ENCODE measurements at regions of chr19 and their contacts with region 1.

Region 1: GRCh38 chr19:34974646-34975045 is 10.6 kb upstream of the ZNF792 start:
- DNase-seq: no peak
- H3K4me3 ChIP-seq: no peak overlapping the region
- H3K27ac ChIP-seq: peak overlapping the region in 1 of 59 donors; percentile 20
- H3K27me3 ChIP-seq: no peaks in the 10 kb centered on the region
- CTCF ChIP-seq: no peak

Region 2: GRCh38 chr19:35013031-35013819 is 38.6 kb after region 1 on chr19:
- intact Hi-C with region 1: loop called (anchors 2 kb)
- DNase-seq: peak in 6 of 10 donors; percentile 49 to 71 (median 56)
- H3K4me3 ChIP-seq: peak overlapping the region in 1 of 59 donors; percentile 21
- H3K27ac ChIP-seq: peak overlapping the region in 19 of 59 donors; percentile 3 to 61 (median 36)
- H3K27me3 ChIP-seq: no peaks in the 10 kb centered on the region
- CTCF ChIP-seq: peak; percentile 67 to 96 (median 90)

Region 3: GRCh38 chr19:35044317-35045117 is 69.9 kb after region 1 on chr19:
- intact Hi-C with region 1: loop called in 1 of 2 experiments (anchors 2 kb)
- DNase-seq: peak in 9 of 10 donors; percentile 73 to 84 (median 79)
- H3K4me3 ChIP-seq: no peak overlapping the region
- H3K27ac ChIP-seq: peak overlapping the region in 53 of 59 donors; percentile 7 to 99 (median 74)
- H3K27me3 ChIP-seq: no peaks in the 10 kb centered on the region
- CTCF ChIP-seq: peak; percentile 92 to 100 (median 98)

Region 4: GRCh38 chr19:35090506-35091237 is 116.0 kb after region 1 on chr19:
- intact Hi-C with region 1: loop called in 1 of 2 experiments (anchors 5 kb)
- DNase-seq: peak in 5 of 10 donors; percentile 54 to 77 (median 60)
- H3K4me3 ChIP-seq: peak overlapping the region in 58 of 59 donors; percentile 13 to 62 (median 42)
- H3K27ac ChIP-seq: peak overlapping the region in 56 of 59 donors; percentile 5 to 89 (median 72)
- H3K27me3 ChIP-seq: peaks cover 0 to 4% (median 0%) of the 10 kb centered on the region in 45 donors
- CTCF ChIP-seq: peak; percentile 22 to 83 (median 70)

Region 5: GRCh38 chr19:35140962-35141637 is 166.5 kb after region 1 on chr19:
- intact Hi-C with region 1: loop called in 1 of 2 experiments (anchors 5 kb)
- DNase-seq: peak; percentile 81 to 97 (median 94)
- H3K4me3 ChIP-seq: peak overlapping the region; percentile 16 to 80 (median 61)
- H3K27ac ChIP-seq: peak overlapping the region in 55 of 59 donors; percentile 13 to 99 (median 89)
- H3K27me3 ChIP-seq: peaks cover 0 to 3% (median 0%) of the 10 kb centered on the region in 45 donors
- CTCF ChIP-seq: peak in 53 of 56 donors; percentile 15 to 72 (median 48)

Measured in dorsolateral prefrontal cortex (tissue), 120 donors.